ENCODE measurements at regions of chr4 and their contacts with region 1.

Region 1: DNA sequence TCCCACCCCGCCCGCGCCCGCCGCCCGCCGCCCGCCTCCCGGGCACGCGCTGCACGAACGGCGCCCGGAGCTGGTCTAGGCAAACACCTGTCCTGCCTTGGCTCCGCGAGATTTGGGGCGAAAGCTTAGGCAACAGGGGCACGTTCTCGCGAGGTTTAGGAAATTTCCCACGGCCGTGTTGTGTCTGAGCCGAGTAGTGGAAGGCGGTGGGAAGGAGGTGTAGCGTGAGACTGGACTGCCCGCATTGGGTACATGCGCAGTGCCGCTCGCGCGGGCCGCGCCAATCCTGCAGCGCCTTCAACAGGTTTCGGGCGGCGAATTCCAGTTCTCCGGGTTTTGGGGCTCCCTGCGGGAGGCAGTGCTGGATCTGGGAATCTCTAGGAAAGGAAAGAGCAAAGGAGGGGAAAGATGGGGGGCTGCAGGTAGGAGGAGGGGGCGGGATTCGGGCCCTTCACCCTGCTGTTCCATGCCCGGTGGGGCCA is 1.3 kb upstream of the RBPJ start:
- DNase-seq: peak; percentile 95 to 99
- H3K4me3 ChIP-seq: peak overlapping the region; percentile 74
- H3K27ac ChIP-seq: peak overlapping the region; percentile 88
- H3K4me1 ChIP-seq: peaks cover 20% of the 10 kb centered on the region; the same call in 1 of the 2 replicates
- H3K27me3 ChIP-seq: no peaks in the 10 kb centered on the region
- CTCF ChIP-seq: no peak

Region 2: GRCh38 chr4:25884031-25884782 is 435.3 kb before region 1 on chr4:
- CTCF ChIA-PET with region 1: no interaction called
- POLR2A ChIA-PET with region 1: interaction called, 20 read pairs
- intact Hi-C with region 1: no loop called
- DNase-seq: no peak
- H3K4me3 ChIP-seq: no peak overlapping the region
- H3K27ac ChIP-seq: no peak overlapping the region
- H3K4me1 ChIP-seq: no peaks in the 10 kb centered on the region
- H3K27me3 ChIP-seq: no peaks in the 10 kb centered on the region
- CTCF ChIP-seq: no peak

Region 3: DNA sequence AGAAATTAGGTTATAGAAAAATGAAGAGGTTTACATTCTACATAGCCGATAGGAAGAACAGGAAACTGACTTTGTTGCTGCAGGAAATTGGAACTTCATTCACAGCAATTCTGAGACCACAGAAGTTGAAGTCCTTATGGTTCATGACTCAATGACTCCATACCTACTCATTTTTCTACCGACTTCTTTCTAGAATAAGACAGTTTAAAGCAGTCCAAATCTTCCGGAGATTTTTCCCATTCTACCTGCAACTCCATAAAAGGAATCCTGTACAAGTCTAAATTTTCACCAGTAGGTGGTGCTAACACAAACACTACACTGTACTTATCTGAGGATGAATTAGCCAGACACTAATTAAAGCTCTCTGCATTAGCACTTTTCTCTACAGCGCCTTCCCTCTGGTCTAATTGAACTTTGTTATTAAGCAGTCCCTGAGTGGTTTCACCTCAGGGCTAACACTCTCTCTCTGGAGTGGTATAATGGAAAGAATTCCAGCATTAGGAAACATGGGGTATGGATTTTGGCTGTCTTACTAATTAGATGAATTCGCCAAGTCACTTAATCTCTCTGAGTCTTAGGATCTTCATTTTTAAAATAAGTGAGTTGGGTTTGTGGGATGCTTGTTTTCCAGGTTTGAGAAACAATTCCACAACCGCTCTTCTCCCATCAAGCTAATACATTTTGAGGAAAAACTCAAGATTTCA is 237.6 kb before region 1 on chr4:
- CTCF ChIA-PET with region 1: no interaction called
- POLR2A ChIA-PET with region 1: interaction called, 11 read pairs
- intact Hi-C with region 1: loop called (anchors 1 kb)
- DNase-seq: no peak
- H3K4me3 ChIP-seq: no peak overlapping the region
- H3K27ac ChIP-seq: no peak overlapping the region
- H3K4me1 ChIP-seq: peaks cover 26% of the 10 kb centered on the region
- H3K27me3 ChIP-seq: no peaks in the 10 kb centered on the region
- CTCF ChIP-seq: peak; percentile 73

Region 4: GRCh38 chr4:26197018-26197779 is 122.3 kb before region 1 on chr4:
- CTCF ChIA-PET with region 1: interaction called, 3 read pairs
- POLR2A ChIA-PET with region 1: interaction called, 3 read pairs
- intact Hi-C with region 1: loop called (anchors 1 kb)
- DNase-seq: peak; percentile 79 to 96
- H3K4me3 ChIP-seq: no peak overlapping the region
- H3K27ac ChIP-seq: peak overlapping the region; percentile 82
- H3K4me1 ChIP-seq: peaks cover 23% of the 10 kb centered on the region
- H3K27me3 ChIP-seq: no peaks in the 10 kb centered on the region
- CTCF ChIP-seq: no peak

Region 5: GRCh38 chr4:26252349-26253025 is 67.0 kb before region 1 on chr4:
- CTCF ChIA-PET with region 1: no interaction called
- POLR2A ChIA-PET with region 1: interaction called, 3 read pairs
- intact Hi-C with region 1: loop called (anchors 2 kb)
- DNase-seq: peak; percentile 69 to 92
- H3K4me3 ChIP-seq: no peak overlapping the region
- H3K27ac ChIP-seq: peak overlapping the region; percentile 53
- H3K4me1 ChIP-seq: peaks cover 13% of the 10 kb centered on the region
- H3K27me3 ChIP-seq: no peaks in the 10 kb centered on the region
- CTCF ChIP-seq: no peak

Region 6: GRCh38 chr4:26288355-26288909 is 31.1 kb before region 1 on chr4:
- CTCF ChIA-PET with region 1: no interaction called
- POLR2A ChIA-PET with region 1: no interaction called
- intact Hi-C with region 1: loop called (anchors 1 kb)
- DNase-seq: peak; percentile 20 to 90
- H3K4me3 ChIP-seq: peak overlapping the region; percentile 11; the same call in 1 of the 2 replicates
- H3K27ac ChIP-seq: peak overlapping the region; percentile 77
- H3K4me1 ChIP-seq: peaks cover 34% of the 10 kb centered on the region
- H3K27me3 ChIP-seq: no peaks in the 10 kb centered on the region
- CTCF ChIP-seq: no peak

Measured in PC-9 (cell line).